ENCODE measurements at regions of chr17 and their contacts with region 1.

Region 1: GRCh38 chr17:42883802-42884553 is 16.6 kb upstream of the G6PC1 start:
- DNase-seq: no peak
- H3K4me3 ChIP-seq: no peak overlapping the region
- CTCF ChIP-seq: no peak

Region 2: GRCh38 chr17:42835732-42836131 is 48.2 kb before region 1 on chr17:
- in situ Hi-C with region 1: loop called (anchors 5 kb)
- DNase-seq: no peak
- H3K4me3 ChIP-seq: no peak overlapping the region
- CTCF ChIP-seq: no peak

Measured in astrocyte of the cerebellum (primary cell).